Sigmoid colon (tissue), 7 donors: ENCODE measurements at regions of chr4 and their contacts with region 1.

Region 1: GRCh38 chr4:143207557-143207956 is 22.8 kb downstream of the USP38 start:
- DNase-seq: no peak
- H3K4me3 ChIP-seq: no peak overlapping the region
- H3K27ac ChIP-seq: peak overlapping the region in 1 of 4 donors; percentile 2
- H3K4me1 ChIP-seq: peaks cover 0 to 10% (median 5%) of the 10 kb centered on the region in 4 donors
- H3K27me3 ChIP-seq: no peaks in the 10 kb centered on the region
- CTCF ChIP-seq: peak; percentile 17 to 58 (median 44)
- EP300 ChIP-seq: no peak
- POLR2A ChIP-seq: no peak

Region 2: DNA sequence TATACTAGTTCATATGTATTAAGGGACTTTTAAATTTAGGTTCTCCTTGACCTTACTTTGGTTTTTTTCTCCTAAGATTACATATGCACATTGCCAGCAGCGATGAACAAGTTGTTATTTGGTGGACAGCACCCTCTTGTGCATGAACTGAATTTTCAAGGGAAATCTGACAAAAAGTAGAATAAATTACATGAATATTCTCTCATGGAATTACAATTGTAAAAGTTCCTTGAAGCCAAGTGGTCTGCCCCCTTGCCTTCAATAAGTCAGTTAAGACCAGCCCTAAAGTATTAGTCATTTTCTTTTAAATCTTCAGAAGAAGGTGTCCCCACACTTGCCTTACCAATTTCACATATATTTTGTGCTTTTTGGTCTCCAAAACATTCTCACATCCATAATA is 275.3 kb after region 1 on chr4:
- intact Hi-C with region 1: loop called (anchors 1 kb)
- DNase-seq: no peak
- H3K4me3 ChIP-seq: no peak overlapping the region
- H3K27ac ChIP-seq: no peak overlapping the region
- H3K4me1 ChIP-seq: no peaks in the 10 kb centered on the region
- H3K27me3 ChIP-seq: no peaks in the 10 kb centered on the region
- CTCF ChIP-seq: peak; percentile 49 to 67 (median 56)
- EP300 ChIP-seq: no peak
- POLR2A ChIP-seq: no peak